PC-9 (cell line): ENCODE measurements at regions of chr6 and their contacts with region 1.

Region 1: DNA sequence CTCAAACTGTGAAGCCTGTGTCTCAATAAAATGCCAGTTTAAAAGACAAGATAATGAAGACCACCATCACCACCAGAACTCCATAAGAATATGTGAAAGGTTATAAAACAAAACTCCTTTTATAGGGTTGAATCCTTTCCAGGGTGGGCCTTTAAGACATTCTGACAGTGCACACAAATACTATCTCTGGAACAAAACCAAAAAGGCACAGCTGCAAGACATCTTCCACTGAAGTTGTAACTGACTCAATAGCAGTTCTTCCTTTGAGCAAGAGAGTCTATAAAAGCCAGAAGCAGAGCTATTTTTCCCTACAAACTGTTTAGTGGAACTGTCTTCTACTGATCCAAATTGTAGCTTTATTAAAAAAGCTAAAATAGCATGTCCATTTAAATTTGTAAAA is 81.6 kb downstream of the EPB41L2 start:
- DNase-seq: no peak
- H3K4me3 ChIP-seq: no peak overlapping the region
- H3K27ac ChIP-seq: no peak overlapping the region
- H3K4me1 ChIP-seq: no peaks in the 10 kb centered on the region
- H3K27me3 ChIP-seq: no peaks in the 10 kb centered on the region
- CTCF ChIP-seq: no peak

Region 2: GRCh38 chr6:130708338-130708737 is 273.1 kb before region 1 on chr6:
- CTCF ChIA-PET with region 1: no interaction called
- POLR2A ChIA-PET with region 1: no interaction called
- intact Hi-C with region 1: loop called (anchors 5 kb)
- DNase-seq: no peak
- H3K4me3 ChIP-seq: no peak overlapping the region
- H3K27ac ChIP-seq: no peak overlapping the region
- H3K4me1 ChIP-seq: peaks cover 4% of the 10 kb centered on the region; the same call in 1 of the 2 replicates
- H3K27me3 ChIP-seq: peaks cover 12% of the 10 kb centered on the region; the same call in 1 of the 2 replicates
- CTCF ChIP-seq: no peak

Region 3: GRCh38 chr6:130958468-130958867 is 22.9 kb before region 1 on chr6:
- CTCF ChIA-PET with region 1: no interaction called
- POLR2A ChIA-PET with region 1: no interaction called
- intact Hi-C with region 1: no loop called
- DNase-seq: no peak
- H3K4me3 ChIP-seq: no peak overlapping the region
- H3K27ac ChIP-seq: no peak overlapping the region
- H3K4me1 ChIP-seq: no peaks in the 10 kb centered on the region
- H3K27me3 ChIP-seq: no peaks in the 10 kb centered on the region
- CTCF ChIP-seq: no peak

Region 4: GRCh38 chr6:130997061-130997753 is 15.8 kb after region 1 on chr6:
- CTCF ChIA-PET with region 1: no interaction called
- POLR2A ChIA-PET with region 1: no interaction called
- intact Hi-C with region 1: no loop called
- DNase-seq: no peak
- H3K4me3 ChIP-seq: no peak overlapping the region
- H3K27ac ChIP-seq: no peak overlapping the region
- H3K4me1 ChIP-seq: peaks cover 25% of the 10 kb centered on the region
- H3K27me3 ChIP-seq: no peaks in the 10 kb centered on the region
- CTCF ChIP-seq: no peak

Region 5: DNA sequence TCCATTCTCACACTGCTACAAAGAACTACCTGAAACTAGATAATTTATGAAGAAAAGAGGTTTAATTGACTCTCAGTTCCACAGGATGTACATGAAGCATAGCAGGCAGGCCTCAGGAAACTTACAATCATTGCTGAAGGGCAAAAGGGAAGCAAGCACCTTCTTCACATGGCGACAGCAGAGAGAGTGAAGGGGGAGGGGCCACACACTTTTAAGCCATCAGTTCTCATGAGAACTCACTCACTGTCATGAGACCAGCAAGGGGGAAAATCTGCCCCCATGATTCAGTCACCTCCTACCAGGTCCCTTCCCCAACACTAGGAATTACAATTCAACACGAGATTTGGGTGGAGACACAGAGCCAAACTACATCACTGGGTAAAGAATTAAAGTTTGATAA is 814.0 kb after region 1 on chr6:
- CTCF ChIA-PET with region 1: no interaction called
- POLR2A ChIA-PET with region 1: no interaction called
- intact Hi-C with region 1: no loop called
- DNase-seq: no peak
- H3K4me3 ChIP-seq: no peak overlapping the region
- H3K27ac ChIP-seq: no peak overlapping the region
- H3K4me1 ChIP-seq: no peaks in the 10 kb centered on the region
- H3K27me3 ChIP-seq: no peaks in the 10 kb centered on the region
- CTCF ChIP-seq: no peak